Endothelial cell of umbilical vein (primary cell): ENCODE measurements at regions of chr19 and their contacts with region 1.

Region 1: DNA sequence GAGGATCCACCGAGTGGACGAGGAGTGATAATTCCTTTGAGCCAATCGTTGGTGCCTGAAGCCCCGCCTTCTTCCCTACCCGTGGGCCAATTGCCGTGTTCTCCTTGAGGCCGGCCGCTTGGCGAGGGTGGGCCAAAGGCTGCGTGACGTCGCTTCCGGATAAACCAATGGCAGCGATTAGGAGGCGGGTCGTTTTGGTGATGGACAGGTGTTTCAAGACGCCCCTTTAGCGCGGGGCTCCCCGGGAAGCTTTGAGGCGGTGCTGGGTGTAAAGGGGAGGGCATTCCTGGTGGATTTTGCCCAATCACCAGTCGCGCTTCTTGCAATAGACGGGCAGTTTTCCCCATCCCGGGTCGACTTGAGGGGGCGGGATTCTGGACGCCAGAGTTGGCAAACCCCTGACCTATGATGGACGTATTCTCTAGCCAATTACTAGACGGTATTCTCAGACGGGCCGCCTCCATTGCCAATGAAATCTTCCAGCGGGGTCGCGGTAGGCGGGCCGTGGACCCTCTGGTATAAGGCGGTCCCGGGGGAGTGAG is 310 bp upstream of the PRMT1 start:
- DNase-seq: peak; percentile 100
- H3K4me3 ChIP-seq: peak overlapping the region; percentile 69 to 97 (median 78)
- H3K27ac ChIP-seq: peak overlapping the region; percentile 95
- H3K4me1 ChIP-seq: peaks cover 25% of the 10 kb centered on the region
- H3K27me3 ChIP-seq: no peaks in the 10 kb centered on the region
- CTCF ChIP-seq: no peak
- POLR2A ChIP-seq: no peak

Region 2: DNA sequence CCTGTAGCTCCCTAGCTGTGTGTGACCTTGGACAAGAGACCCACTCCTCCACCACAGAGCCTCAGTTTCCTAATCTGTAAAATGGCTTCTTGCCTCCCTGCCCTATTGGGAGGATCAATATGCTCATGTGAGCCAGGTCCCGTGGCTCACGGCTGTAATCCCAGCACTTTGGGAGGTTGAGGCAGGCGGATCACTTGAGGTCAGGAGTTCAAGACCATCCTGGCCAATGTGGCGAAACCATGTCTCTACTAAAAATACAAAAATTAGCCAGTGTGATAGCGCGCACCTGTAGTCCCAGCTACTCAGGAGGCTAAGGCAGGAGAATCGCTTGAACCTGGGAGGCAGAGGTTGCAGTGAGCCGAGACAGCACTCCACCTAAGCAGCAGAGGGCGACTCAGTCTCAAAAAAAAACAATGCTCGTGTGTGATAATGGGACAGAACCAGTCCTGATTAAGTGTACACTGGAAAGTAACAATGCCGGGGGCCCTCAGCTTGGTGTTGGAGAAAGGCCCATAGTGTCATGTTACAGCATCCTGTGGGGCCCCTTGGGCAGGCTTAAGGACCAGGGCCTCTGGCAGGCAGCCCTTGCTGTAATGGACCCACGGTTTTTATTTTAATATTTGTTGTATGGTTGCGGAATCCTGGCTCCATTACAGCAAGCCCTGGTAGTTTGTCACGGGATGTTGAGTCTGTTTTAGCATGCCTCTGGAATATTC is 173.7 kb before region 1 on chr19:
- CTCF ChIA-PET with region 1: interaction called, 12 read pairs
- POLR2A ChIA-PET with region 1: interaction called, 3 read pairs
- dilution Hi-C with region 1: no loop called
- intact Hi-C with region 1: loop called (anchors 2 kb)
- DNase-seq: peak; percentile 83
- H3K4me3 ChIP-seq: no peak overlapping the region
- H3K27ac ChIP-seq: no peak overlapping the region
- H3K4me1 ChIP-seq: peaks cover 28% of the 10 kb centered on the region
- H3K27me3 ChIP-seq: no peaks in the 10 kb centered on the region
- CTCF ChIP-seq: peak; percentile 41 to 70
- POLR2A ChIP-seq: no peak

Region 3: GRCh38 chr19:49570138-49570856 is 106.5 kb before region 1 on chr19:
- CTCF ChIA-PET with region 1: interaction called, 13 read pairs
- POLR2A ChIA-PET with region 1: no interaction called
- dilution Hi-C with region 1: no loop called
- intact Hi-C with region 1: no loop called
- DNase-seq: peak; percentile 80
- H3K4me3 ChIP-seq: no peak overlapping the region
- H3K27ac ChIP-seq: no peak overlapping the region
- H3K4me1 ChIP-seq: no peaks in the 10 kb centered on the region
- H3K27me3 ChIP-seq: no peaks in the 10 kb centered on the region
- CTCF ChIP-seq: peak; percentile 94 to 99
- POLR2A ChIP-seq: no peak

Region 4: GRCh38 chr19:49614096-49614833 is 62.5 kb before region 1 on chr19:
- CTCF ChIA-PET with region 1: interaction called, 3 read pairs
- POLR2A ChIA-PET with region 1: no interaction called
- dilution Hi-C with region 1: no loop called
- intact Hi-C with region 1: loop called (anchors 2 kb)
- DNase-seq: peak; percentile 94
- H3K4me3 ChIP-seq: no peak overlapping the region
- H3K27ac ChIP-seq: peak overlapping the region; percentile 71
- H3K4me1 ChIP-seq: peaks cover 23% of the 10 kb centered on the region
- H3K27me3 ChIP-seq: no peaks in the 10 kb centered on the region
- CTCF ChIP-seq: peak in 1 of 2 donors; percentile 13
- POLR2A ChIP-seq: no peak

Region 5: GRCh38 chr19:49869441-49870176 is 192.8 kb after region 1 on chr19:
- CTCF ChIA-PET with region 1: no interaction called
- POLR2A ChIA-PET with region 1: no interaction called
- dilution Hi-C with region 1: no loop called
- intact Hi-C with region 1: loop called (anchors 5 kb)
- DNase-seq: peak; percentile 100
- H3K4me3 ChIP-seq: peak overlapping the region; percentile 18 to 53 (median 30)
- H3K27ac ChIP-seq: peak overlapping the region; percentile 3
- H3K4me1 ChIP-seq: peaks cover 26% of the 10 kb centered on the region
- H3K27me3 ChIP-seq: no peaks in the 10 kb centered on the region
- CTCF ChIP-seq: no peak
- POLR2A ChIP-seq: peak; percentile 90

Region 6: DNA sequence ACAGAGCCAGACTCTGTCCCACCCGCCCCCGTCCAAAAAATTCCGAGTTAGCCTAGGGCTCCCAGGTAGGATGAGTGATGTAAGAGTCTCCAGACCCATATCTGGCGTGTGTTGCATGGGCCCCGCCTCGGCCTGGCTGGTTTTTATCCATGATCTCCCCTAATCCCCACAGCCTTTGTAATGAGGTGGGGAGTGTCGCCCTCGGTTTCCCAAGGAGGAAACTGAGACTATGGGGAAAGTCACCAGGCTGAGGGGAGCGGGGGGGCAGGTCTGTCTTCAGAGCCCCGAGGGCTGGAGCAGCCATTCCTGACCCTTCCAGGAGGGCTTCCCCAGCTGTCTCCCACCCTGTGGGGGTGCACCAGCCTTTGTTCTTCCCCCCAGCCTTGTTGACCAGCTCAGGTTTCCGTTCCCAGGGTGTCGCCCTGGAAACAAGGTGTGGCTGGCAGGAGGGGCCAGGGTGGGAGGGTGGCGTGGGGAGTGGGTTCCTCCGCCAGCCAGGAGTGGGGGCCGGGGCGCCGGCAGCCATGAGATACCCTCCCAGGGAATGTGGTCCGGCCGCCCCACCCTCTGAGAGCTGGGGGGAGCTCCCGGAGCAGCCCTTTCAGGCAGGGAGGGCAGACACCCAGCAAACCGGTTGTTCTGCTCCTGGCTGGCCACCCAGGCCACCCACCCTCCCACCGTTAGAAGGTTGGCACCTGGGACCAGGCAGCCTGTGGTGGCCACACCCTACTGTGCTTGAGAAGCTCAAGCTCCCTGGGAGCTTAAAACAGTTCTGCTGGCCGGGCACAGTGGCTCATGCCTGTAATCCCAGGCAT is 538.2 kb after region 1 on chr19:
- CTCF ChIA-PET with region 1: no interaction called
- POLR2A ChIA-PET with region 1: no interaction called
- dilution Hi-C with region 1: no loop called
- intact Hi-C with region 1: no loop called
- DNase-seq: no peak
- H3K4me3 ChIP-seq: no peak overlapping the region
- H3K27ac ChIP-seq: no peak overlapping the region
- H3K4me1 ChIP-seq: no peaks in the 10 kb centered on the region
- H3K27me3 ChIP-seq: no peaks in the 10 kb centered on the region
- CTCF ChIP-seq: no peak
- POLR2A ChIP-seq: no peak